ENCODE measurements at regions of chr4 and their contacts with region 1.

Region 1: DNA sequence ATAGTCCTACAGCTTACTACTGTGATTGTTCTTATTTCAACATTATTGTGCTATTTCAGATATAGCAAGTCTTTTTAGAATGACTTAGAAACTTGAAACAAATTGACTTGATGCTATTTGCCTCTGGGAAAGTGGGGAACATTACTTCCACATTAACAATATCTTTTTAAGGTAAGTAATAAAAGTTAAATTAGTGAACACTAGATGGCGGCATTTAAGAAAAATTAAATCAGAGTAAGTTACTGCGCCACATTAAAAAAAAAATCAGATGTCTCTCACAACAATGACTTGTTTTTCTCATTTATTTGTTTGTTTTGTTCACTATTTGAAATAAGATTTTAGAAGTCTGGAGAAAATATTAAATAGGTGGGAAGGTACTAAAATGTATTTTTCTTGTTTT is 1026.9 kb upstream of the SLIT2 start:
- DNase-seq: no peak
- ATAC-seq: no peak
- H3K4me3 ChIP-seq: no peak overlapping the region
- H3K27ac ChIP-seq: no peak overlapping the region
- H3K4me1 ChIP-seq: no peaks in the 10 kb centered on the region
- H3K27me3 ChIP-seq: no peaks in the 10 kb centered on the region
- CTCF ChIP-seq: peak; percentile 24

Region 2: DNA sequence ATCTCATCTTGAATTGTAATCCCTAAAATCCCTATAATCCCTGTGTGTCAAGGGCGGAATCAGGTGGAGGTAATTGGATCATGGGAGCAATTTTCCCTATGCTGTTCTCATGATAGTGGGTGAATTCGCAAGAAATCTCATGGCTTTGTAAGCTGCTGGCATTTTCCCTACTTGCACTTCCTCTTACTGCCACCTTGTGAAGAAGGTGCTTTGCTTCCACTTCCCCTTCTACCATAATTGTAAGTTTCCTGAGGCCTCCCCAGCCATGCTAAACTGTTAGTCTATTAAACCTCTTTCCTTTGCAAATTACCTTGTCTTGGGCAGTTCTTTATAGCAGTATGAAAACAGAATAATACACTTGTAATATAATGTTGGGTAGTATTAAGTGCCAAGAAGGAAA is 60.5 kb before region 1 on chr4:
- intact Hi-C with region 1: no loop called
- DNase-seq: no peak
- ATAC-seq: no peak
- H3K4me3 ChIP-seq: no peak overlapping the region
- H3K27ac ChIP-seq: no peak overlapping the region
- H3K4me1 ChIP-seq: no peaks in the 10 kb centered on the region
- H3K27me3 ChIP-seq: no peaks in the 10 kb centered on the region
- CTCF ChIP-seq: no peak

Region 3: DNA sequence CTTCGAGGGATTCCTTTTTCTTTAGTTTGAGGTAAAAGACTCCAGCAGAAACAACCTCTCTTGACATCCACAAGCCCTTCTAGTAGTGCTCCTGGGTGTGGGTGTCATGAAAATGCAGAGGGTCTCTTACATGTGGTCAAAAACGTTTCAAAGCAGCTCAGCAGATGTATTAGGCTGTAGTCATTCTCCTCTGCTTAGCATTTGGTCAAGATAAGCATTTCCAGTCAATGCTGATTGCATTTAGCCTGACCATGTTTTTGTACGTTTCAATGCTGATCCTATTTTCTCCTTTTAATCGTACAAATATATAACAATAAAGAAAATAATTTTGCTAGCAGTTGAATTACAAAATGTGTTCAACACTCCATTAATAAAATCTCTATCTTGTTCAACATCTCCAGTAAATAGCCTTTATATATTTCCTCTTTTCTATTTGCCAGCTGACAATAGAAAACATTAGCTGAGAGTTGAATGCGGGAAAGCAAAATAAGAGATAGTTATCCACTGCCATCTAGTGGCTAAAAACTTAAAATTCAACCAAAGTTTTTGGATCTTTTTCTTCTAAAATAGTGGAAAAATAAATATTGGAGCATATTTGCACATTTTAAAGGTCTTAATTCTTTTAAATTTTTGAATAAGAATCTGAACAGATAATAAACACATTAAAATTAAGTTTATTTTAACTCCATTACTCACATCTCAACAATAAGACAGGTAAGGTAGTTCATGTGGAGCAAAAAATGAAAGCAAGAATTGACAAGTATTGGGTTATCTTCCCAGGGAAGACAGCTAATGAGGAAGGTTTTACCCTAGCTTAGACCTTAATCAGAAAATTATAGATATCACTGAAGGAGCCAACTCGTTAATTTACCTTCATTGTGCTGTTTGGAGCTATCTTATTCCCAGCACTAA is 1460.3 kb after region 1 on chr4:
- intact Hi-C with region 1: loop called in 1 of 2 experiments (anchors 2 kb)
- DNase-seq: no peak
- ATAC-seq: no peak
- H3K4me3 ChIP-seq: no peak overlapping the region
- H3K27ac ChIP-seq: no peak overlapping the region
- H3K4me1 ChIP-seq: no peaks in the 10 kb centered on the region
- H3K27me3 ChIP-seq: peaks cover 0 to 4% (median 0%) of the 10 kb centered on the region in 3 donors
- CTCF ChIP-seq: peak; percentile 68

Measured in psoas muscle (tissue), 8 donors.